ENCODE measurements at regions of chr9 and their contacts with region 1.

Region 1: GRCh38 chr9:81848472-81848871 is 79.8 kb upstream of the SPATA31D4 start:
- DNase-seq: peak; percentile 96
- H3K4me3 ChIP-seq: no peak overlapping the region
- H3K27ac ChIP-seq: peak overlapping the region; percentile 69
- H3K4me1 ChIP-seq: peaks cover 46% of the 10 kb centered on the region
- H3K27me3 ChIP-seq: no peaks in the 10 kb centered on the region
- CTCF ChIP-seq: peak; percentile 14 to 29
- POLR2A ChIP-seq: no peak

Region 2: DNA sequence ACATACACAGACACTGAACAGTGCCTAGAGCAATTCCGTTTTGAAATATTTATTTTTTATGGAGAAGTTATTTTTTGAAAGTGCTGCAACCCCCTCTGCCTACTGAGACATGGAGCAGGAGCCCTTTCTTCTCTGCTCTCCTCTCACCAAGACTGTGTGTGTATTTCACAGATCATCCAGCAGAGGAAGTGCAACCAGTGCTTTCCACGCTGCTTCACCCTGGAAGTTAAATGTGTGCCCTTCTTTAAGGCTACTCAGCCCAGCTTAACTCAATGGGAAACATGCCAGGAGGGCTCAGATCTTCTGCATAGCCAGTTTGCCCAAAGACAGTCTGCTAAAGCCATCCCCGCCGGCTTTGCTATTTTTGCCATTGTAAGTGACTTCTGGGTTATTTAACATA is 765.4 kb before region 1 on chr9:
- CTCF ChIA-PET with region 1: no interaction called
- POLR2A ChIA-PET with region 1: no interaction called
- dilution Hi-C with region 1: no loop called
- intact Hi-C with region 1: loop called (anchors 5 kb)
- DNase-seq: no peak
- H3K4me3 ChIP-seq: no peak overlapping the region
- H3K27ac ChIP-seq: no peak overlapping the region
- H3K4me1 ChIP-seq: no peaks in the 10 kb centered on the region
- H3K27me3 ChIP-seq: no peaks in the 10 kb centered on the region
- CTCF ChIP-seq: no peak
- POLR2A ChIP-seq: no peak

Region 3: GRCh38 chr9:81521892-81522291 is 326.6 kb before region 1 on chr9:
- CTCF ChIA-PET with region 1: interaction called, 18 read pairs
- POLR2A ChIA-PET with region 1: no interaction called
- dilution Hi-C with region 1: no loop called
- intact Hi-C with region 1: loop called (anchors 1 kb)
- DNase-seq: no peak
- H3K4me3 ChIP-seq: no peak overlapping the region
- H3K27ac ChIP-seq: no peak overlapping the region
- H3K4me1 ChIP-seq: peaks cover 8% of the 10 kb centered on the region
- H3K27me3 ChIP-seq: no peaks in the 10 kb centered on the region
- CTCF ChIP-seq: no peak
- POLR2A ChIP-seq: no peak

Region 4: GRCh38 chr9:81759668-81760215 is 88.7 kb before region 1 on chr9:
- CTCF ChIA-PET with region 1: no interaction called
- POLR2A ChIA-PET with region 1: no interaction called
- dilution Hi-C with region 1: no loop called
- intact Hi-C with region 1: loop called (anchors 1 kb)
- DNase-seq: peak; percentile 95
- H3K4me3 ChIP-seq: no peak overlapping the region
- H3K27ac ChIP-seq: peak overlapping the region; percentile 91
- H3K4me1 ChIP-seq: peaks cover 11% of the 10 kb centered on the region
- H3K27me3 ChIP-seq: no peaks in the 10 kb centered on the region
- CTCF ChIP-seq: no peak
- POLR2A ChIP-seq: no peak

Region 5: DNA sequence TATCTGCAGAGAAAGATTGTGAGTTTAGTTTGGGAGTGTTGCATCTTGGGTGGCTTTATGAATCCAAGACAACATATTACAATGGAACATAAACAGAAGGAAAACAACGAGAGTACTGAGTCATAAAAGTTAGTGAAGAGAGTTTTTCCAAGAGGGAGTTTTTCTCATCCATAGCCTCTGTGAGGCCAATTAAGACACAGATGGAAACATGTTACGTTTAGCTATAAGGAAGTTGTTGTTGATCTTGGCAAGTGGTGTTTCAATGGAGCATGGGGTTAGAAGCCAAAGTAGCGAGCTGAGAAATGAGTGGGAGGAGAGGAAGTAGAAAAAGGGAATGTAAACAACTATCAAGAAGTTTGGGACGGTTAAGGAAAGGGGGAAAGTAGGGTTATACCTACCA is 26.5 kb after region 1 on chr9:
- CTCF ChIA-PET with region 1: interaction called, 8 read pairs
- POLR2A ChIA-PET with region 1: interaction called, 3 read pairs
- dilution Hi-C with region 1: no loop called
- intact Hi-C with region 1: loop called (anchors 1 kb)
- DNase-seq: peak; percentile 97
- H3K4me3 ChIP-seq: no peak overlapping the region
- H3K27ac ChIP-seq: peak overlapping the region; percentile 95
- H3K4me1 ChIP-seq: peaks cover 38% of the 10 kb centered on the region
- H3K27me3 ChIP-seq: no peaks in the 10 kb centered on the region
- CTCF ChIP-seq: no peak
- POLR2A ChIP-seq: no peak

Measured in endothelial cell of umbilical vein (primary cell).